ENCODE measurements at regions of chr20 and their contacts with region 1.

Region 1: GRCh38 chr20:20130399-20130798 is 78.1 kb downstream of the CFAP61 start:
- DNase-seq: peak in 1 of 2 donors; percentile 13
- ATAC-seq: peak; percentile 32 to 69 (median 50)
- H3K4me3 ChIP-seq: no peak overlapping the region
- H3K4me3 Mint-ChIP-seq: no peak overlapping the region
- H3K27ac ChIP-seq: no peak overlapping the region
- H3K27ac Mint-ChIP-seq: peak overlapping the region in 1 of 2 donors; percentile 43
- H3K4me1 ChIP-seq: peaks cover 4% of the 10 kb centered on the region
- H3K4me1 Mint-ChIP-seq: peaks cover 0 to 5% of the 10 kb centered on the region in 2 donors
- H3K27me3 ChIP-seq: no peaks in the 10 kb centered on the region
- H3K27me3 Mint-ChIP-seq: peaks cover 4 to 16% of the 10 kb centered on the region in 2 donors
- CTCF ChIP-seq: peak; percentile 57

Region 2: DNA sequence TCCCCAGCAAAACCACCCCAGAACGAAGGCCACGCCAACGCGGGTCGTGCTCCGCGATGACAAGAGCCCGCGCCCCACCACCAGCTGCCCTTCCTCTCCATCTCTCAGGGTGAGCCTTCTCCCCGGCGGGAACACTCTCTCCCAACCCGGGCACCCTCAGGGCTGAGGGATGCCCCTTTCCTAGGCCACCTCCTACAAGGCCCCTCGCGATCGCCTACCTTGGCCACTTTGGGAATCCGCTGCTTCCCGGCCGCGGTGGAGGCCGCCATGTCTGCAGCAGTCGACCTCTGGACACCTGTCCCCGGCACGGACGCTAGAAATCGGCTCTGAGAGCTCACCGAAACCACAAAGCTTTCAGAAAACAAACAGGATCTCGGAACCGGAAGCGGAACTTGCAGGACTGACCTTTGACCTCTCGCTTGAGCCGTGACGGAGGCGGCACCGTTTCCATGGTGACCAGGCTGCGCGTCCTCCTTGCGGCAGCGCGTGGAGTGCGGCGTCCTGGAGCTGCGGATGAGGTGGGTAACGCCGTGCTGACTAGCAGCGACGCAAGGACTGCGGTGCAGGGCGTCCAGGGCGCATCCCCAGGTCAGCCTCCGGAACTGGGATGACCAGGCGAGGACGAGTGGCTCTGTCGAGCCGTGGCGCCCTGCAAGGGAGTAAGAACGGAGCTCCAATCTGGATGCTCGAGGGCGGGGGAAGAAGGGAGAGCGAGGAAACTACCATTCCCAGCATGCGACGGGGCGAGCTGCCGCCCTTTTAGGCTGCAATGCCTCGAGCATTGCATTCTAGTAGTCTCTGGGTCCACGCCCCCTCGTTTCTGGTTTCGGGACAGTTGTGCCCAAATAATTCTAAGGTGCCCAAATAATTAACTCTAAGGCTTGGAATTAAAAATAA is 78.1 kb before region 1 on chr20 and contains the starts of genes CFAP61 and CRNKL1:
- intact Hi-C with region 1: no loop called
- DNase-seq: peak; percentile 96 to 100
- ATAC-seq: peak; percentile 91 to 95 (median 93)
- H3K4me3 ChIP-seq: peak within 1 kb of the TSS; percentile 66
- H3K4me3 Mint-ChIP-seq: peak within 1 kb of the TSS; percentile 100
- H3K27ac ChIP-seq: peak within 1 kb of the TSS; percentile 73
- H3K27ac Mint-ChIP-seq: peak within 1 kb of the TSS; percentile 99
- H3K4me1 ChIP-seq: peaks cover 6% of the 10 kb centered on the region
- H3K4me1 Mint-ChIP-seq: peaks cover 17 to 27% of the 10 kb centered on the region in 2 donors
- H3K27me3 ChIP-seq: no peaks in the 10 kb centered on the region
- H3K27me3 Mint-ChIP-seq: peaks cover 0 to 4% of the 10 kb centered on the region in 2 donors
- CTCF ChIP-seq: no peak
- total RNA-seq, gene CFAP61: 1.0 to 2.1 (median 1.3) TPM
- total RNA-seq, gene CRNKL1: 30.8 to 34.5 (median 31.6) TPM

Region 3: GRCh38 chr20:20215976-20216727 is 85.8 kb after region 1 on chr20:
- intact Hi-C with region 1: loop called (anchors 5 kb)
- DNase-seq: peak; percentile 66 to 68
- ATAC-seq: peak; percentile 84 to 94 (median 89)
- H3K4me3 ChIP-seq: no peak overlapping the region
- H3K4me3 Mint-ChIP-seq: peak overlapping the region; percentile 76
- H3K27ac ChIP-seq: peak overlapping the region; percentile 75
- H3K27ac Mint-ChIP-seq: peak overlapping the region; percentile 91 to 96
- H3K4me1 ChIP-seq: no peaks in the 10 kb centered on the region
- H3K4me1 Mint-ChIP-seq: peaks cover 47 to 50% of the 10 kb centered on the region in 2 donors
- H3K27me3 ChIP-seq: no peaks in the 10 kb centered on the region
- H3K27me3 Mint-ChIP-seq: no peaks in the 10 kb centered on the region
- CTCF ChIP-seq: no peak

Region 4: GRCh38 chr20:20237093-20237959 is 106.9 kb after region 1 on chr20:
- intact Hi-C with region 1: loop called (anchors 1 kb)
- DNase-seq: peak; percentile 40 to 62
- ATAC-seq: peak; percentile 79 to 98 (median 93)
- H3K4me3 ChIP-seq: no peak overlapping the region
- H3K4me3 Mint-ChIP-seq: no peak overlapping the region
- H3K27ac ChIP-seq: no peak overlapping the region
- H3K27ac Mint-ChIP-seq: peak overlapping the region; percentile 52 to 80
- H3K4me1 ChIP-seq: peaks cover 9% of the 10 kb centered on the region
- H3K4me1 Mint-ChIP-seq: peaks cover 12 to 20% of the 10 kb centered on the region in 2 donors
- H3K27me3 ChIP-seq: no peaks in the 10 kb centered on the region
- H3K27me3 Mint-ChIP-seq: no peaks in the 10 kb centered on the region
- CTCF ChIP-seq: peak; percentile 86

Region 5: GRCh38 chr20:20317195-20317594 is 186.8 kb after region 1 on chr20:
- intact Hi-C with region 1: no loop called
- DNase-seq: no peak
- ATAC-seq: no peak
- H3K4me3 ChIP-seq: no peak overlapping the region
- H3K4me3 Mint-ChIP-seq: no peak overlapping the region
- H3K27ac ChIP-seq: no peak overlapping the region
- H3K27ac Mint-ChIP-seq: no peak overlapping the region
- H3K4me1 ChIP-seq: peaks cover 14% of the 10 kb centered on the region
- H3K4me1 Mint-ChIP-seq: no peaks in the 10 kb centered on the region
- H3K27me3 ChIP-seq: no peaks in the 10 kb centered on the region
- H3K27me3 Mint-ChIP-seq: peaks cover 0 to under 1% of the 10 kb centered on the region in 2 donors
- CTCF ChIP-seq: no peak

Region 6: GRCh38 chr20:20824924-20825584 is 694.7 kb after region 1 on chr20:
- intact Hi-C with region 1: loop called (anchors 5 kb)
- DNase-seq: peak; percentile 40 to 69
- ATAC-seq: peak; percentile 58 to 84 (median 75)
- H3K4me3 ChIP-seq: no peak overlapping the region
- H3K4me3 Mint-ChIP-seq: no peak overlapping the region
- H3K27ac ChIP-seq: no peak overlapping the region
- H3K27ac Mint-ChIP-seq: no peak overlapping the region
- H3K4me1 ChIP-seq: peaks cover 4% of the 10 kb centered on the region
- H3K4me1 Mint-ChIP-seq: peaks cover 5 to 6% of the 10 kb centered on the region in 2 donors
- H3K27me3 ChIP-seq: no peaks in the 10 kb centered on the region
- H3K27me3 Mint-ChIP-seq: peaks cover 13 to 25% of the 10 kb centered on the region in 2 donors
- CTCF ChIP-seq: peak; percentile 78

Measured in natural killer cell (primary cell).